ENCODE measurements at regions of chr5 and their contacts with region 1.

Region 1: GRCh38 chr5:79133657-79134451 is 22.2 kb downstream of the BHMT start:
- DNase-seq: peak; percentile 53
- H3K4me3 ChIP-seq: peak overlapping the region; percentile 51
- H3K27ac ChIP-seq: peak overlapping the region; percentile 66
- H3K4me1 ChIP-seq: peaks cover 13% of the 10 kb centered on the region
- H3K27me3 ChIP-seq: no peaks in the 10 kb centered on the region
- CTCF ChIP-seq: peak; percentile 75

Region 2: GRCh38 chr5:79020861-79021561 is 112.8 kb before region 1 on chr5:
- intact Hi-C with region 1: loop called (anchors 5 kb)
- DNase-seq: peak; percentile 29
- H3K4me3 ChIP-seq: peak overlapping the region; percentile 34
- H3K27ac ChIP-seq: no peak overlapping the region
- H3K4me1 ChIP-seq: peaks cover 11% of the 10 kb centered on the region
- H3K27me3 ChIP-seq: peaks cover 6% of the 10 kb centered on the region
- CTCF ChIP-seq: peak; percentile 86

Region 3: DNA sequence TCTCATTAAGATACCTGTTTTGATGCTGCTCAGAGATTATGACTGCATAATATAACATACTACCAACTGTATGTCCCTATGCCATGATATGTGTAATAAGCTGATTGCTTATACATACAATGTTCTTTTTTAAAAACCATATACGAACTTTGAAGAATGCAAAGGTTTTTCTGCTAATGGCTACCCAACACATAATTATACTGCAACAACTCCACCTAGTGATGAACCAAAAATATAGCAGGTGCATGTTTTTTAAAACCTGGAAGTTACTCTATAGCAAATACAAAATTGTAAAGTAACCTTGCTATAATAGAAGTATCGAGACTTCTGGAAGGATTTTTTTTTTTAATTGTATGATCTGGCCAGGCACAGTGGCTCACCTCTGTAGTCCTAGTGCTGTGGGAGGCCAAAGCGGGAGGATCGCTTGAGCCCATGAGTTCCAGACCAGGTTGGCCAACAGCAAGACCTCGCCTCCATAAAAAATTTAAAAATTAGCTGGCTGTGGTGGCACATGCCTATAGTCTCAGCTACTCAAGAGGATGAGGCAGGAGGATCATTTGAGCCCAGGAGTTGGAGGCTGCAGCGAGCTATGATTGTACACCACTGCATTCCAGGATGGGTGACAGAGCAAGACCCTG is 331.0 kb after region 1 on chr5:
- intact Hi-C with region 1: loop called (anchors 10 kb)
- DNase-seq: no peak
- H3K4me3 ChIP-seq: no peak overlapping the region
- H3K27ac ChIP-seq: no peak overlapping the region
- H3K4me1 ChIP-seq: peaks cover 11% of the 10 kb centered on the region
- H3K27me3 ChIP-seq: no peaks in the 10 kb centered on the region
- CTCF ChIP-seq: peak; percentile 66

Region 4: DNA sequence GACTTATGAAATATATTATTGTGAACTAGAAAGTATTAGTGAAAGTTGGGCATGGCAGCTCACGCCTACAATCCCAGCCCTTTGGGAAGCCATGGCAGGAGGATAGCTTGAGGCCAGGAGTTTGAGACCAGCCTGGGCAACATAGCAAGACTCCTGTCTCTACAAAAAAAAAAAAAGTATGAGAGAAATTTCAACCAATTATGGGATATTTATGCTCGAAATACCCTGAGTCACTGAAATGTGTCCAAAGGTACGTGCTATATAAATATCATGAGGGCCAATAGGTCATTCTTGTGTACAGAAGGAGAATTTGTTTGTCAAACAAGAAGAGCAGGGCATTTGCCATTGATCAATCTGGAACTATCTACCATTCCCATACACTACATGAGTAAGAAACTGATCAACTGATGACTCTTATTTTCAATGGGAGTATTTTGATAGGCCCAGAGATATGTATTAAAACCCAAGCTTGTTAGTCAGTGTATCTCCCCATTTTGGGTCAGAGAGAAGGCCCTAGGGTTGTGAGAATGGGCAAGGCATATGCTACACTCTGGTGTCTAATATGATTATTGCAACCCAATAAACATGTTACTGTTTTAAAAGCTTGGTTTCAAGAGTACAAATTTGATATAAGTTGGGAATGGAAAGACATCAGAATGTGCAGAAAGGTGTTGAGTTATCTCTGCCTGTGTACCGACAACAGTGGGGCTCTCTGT is 401.8 kb after region 1 on chr5:
- intact Hi-C with region 1: loop called (anchors 10 kb)
- DNase-seq: no peak
- H3K4me3 ChIP-seq: no peak overlapping the region
- H3K27ac ChIP-seq: no peak overlapping the region
- H3K4me1 ChIP-seq: no peaks in the 10 kb centered on the region
- H3K27me3 ChIP-seq: no peaks in the 10 kb centered on the region
- CTCF ChIP-seq: peak; percentile 56